Mammary epithelial cell (primary cell): ENCODE measurements at regions of chr9 and their contacts with region 1.

Region 1: GRCh38 chr9:78919701-78920100 is 622.8 kb downstream of the PSAT1 start:
- DNase-seq: peak; percentile 60
- H3K4me3 ChIP-seq: no peak overlapping the region
- H3K27ac ChIP-seq: no peak overlapping the region
- H3K4me1 ChIP-seq: peaks cover 15% of the 10 kb centered on the region
- H3K27me3 ChIP-seq: no peaks in the 10 kb centered on the region
- CTCF ChIP-seq: no peak

Region 2: DNA sequence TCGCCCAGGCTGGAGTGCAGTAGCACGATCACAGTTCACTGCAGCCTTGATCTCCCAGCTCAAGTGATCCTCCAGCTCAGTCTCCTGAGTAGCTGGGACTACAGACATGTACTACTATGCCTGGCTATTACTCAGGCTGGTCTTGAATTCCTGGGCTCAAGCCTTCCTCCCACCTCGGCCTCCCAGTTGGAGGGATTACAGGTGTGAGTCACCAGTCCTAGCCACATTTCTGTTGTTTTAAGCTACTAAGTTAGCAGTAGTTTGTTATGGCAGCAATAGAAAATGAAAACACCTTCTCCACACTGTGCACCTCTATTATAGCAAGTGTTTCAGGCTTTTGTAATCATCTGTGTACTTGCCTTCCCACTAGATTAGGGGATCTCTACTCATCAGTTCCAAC is 63.1 kb after region 1 on chr9:
- CTCF ChIA-PET with region 1: no interaction called
- dilution Hi-C with region 1: no loop called
- in situ Hi-C with region 1: no loop called
- intact Hi-C with region 1: no loop called
- DNase-seq: peak; percentile 87
- H3K4me3 ChIP-seq: no peak overlapping the region
- H3K27ac ChIP-seq: no peak overlapping the region
- H3K4me1 ChIP-seq: peaks cover 33% of the 10 kb centered on the region
- H3K27me3 ChIP-seq: no peaks in the 10 kb centered on the region
- CTCF ChIP-seq: no peak

Region 3: DNA sequence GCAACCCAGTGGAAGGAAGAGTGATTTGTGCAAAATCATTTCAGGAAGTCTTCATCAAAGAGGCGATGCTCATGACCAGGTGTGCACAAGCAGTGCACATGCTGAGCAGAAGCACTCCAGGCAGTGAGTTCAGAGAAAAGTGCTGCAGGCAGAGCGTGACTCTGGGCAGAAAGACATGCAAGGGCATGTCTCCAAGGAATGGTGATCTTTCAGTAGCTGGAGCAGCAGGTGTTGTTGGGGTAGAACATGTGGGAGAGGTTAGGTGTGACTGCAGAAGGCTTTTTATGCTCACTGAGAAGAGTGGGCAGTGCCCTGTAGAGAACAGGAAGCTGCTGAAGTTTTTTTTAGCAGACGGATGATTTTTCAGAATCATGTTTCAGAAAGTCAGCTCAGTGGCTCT is 106.6 kb after region 1 on chr9:
- CTCF ChIA-PET with region 1: no interaction called
- dilution Hi-C with region 1: no loop called
- in situ Hi-C with region 1: no loop called
- intact Hi-C with region 1: loop called (anchors 5 kb)
- DNase-seq: peak; percentile 95
- H3K4me3 ChIP-seq: no peak overlapping the region
- H3K27ac ChIP-seq: peak overlapping the region; percentile 48
- H3K4me1 ChIP-seq: peaks cover 55% of the 10 kb centered on the region
- H3K27me3 ChIP-seq: no peaks in the 10 kb centered on the region
- CTCF ChIP-seq: no peak

Region 4: DNA sequence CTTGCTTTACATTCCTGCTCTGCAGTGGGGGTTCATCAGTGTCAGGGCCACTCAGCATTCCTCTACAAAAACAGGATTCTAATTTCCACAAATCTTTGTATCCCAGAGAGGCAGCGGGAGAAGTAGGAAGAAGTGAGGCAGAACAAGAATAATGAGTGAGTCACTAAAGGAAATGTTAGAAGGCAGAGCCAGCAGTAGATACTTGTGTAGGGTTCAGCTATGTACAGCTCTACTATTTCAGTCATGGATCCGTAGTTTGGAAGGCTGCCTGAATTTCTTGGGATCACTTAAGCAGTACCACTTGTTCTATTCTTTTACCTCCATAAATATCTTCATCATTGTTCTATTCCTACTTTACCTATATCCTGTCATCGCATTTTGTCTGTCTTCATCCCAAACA is 405.8 kb after region 1 on chr9:
- CTCF ChIA-PET with region 1: no interaction called
- dilution Hi-C with region 1: no loop called
- in situ Hi-C with region 1: no loop called
- intact Hi-C with region 1: no loop called
- DNase-seq: no peak
- H3K4me3 ChIP-seq: no peak overlapping the region
- H3K27ac ChIP-seq: no peak overlapping the region
- H3K4me1 ChIP-seq: no peaks in the 10 kb centered on the region
- H3K27me3 ChIP-seq: no peaks in the 10 kb centered on the region
- CTCF ChIP-seq: no peak